ENCODE measurements at regions of chr17 and their contacts with region 1.

Region 1: DNA sequence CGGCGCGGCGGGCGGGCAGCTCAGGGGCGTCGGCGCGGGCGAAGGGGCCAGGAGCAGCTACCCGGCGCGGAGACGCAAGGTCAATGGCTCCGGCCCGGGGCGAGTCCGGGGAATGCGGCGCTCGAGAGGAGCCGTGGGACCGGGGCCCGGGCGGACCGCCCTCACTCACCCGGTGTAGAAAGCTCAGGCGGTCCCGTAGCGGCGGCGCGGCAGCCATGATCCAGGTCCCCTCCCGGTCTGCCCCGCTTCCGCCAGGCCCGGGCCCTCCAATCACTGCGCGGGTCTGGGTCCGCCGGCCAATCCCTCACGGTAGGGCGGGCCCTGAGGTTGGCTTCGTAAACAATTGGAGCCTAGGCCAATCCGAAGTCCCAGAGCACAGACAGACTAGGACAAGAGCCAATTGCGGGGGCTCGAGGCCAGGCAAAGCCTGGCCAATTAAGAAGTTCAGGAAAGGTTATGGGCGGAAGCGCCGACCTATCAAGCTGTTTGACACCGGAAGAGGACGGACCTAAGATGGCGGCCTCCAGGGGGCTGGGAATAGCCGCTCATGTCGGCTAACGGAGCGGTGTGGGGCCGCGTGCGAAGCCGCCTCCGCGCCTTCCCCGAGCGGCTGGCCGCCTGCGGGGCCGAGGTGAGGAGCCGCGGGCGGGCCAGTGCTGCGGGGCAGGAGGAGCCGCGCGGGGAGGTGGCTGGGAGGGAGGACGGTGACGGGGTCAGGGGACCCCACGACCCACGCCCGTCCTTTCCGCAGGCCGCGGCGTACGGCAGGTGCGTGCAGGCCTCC is at the starts of genes NDUFAF8 and TEPSIN:
- DNase-seq: peak; percentile 96 to 98
- ATAC-seq: peak; percentile 93 to 98 (median 93)
- H3K4me3 ChIP-seq: peak within 1 kb of the TSS; percentile 65
- H3K4me3 Mint-ChIP-seq: peak within 1 kb of the TSS; percentile 94
- H3K27ac ChIP-seq: peak within 1 kb of the TSS; percentile 11
- H3K27ac Mint-ChIP-seq: peak within 1 kb of the TSS; percentile 76 to 90
- H3K4me1 ChIP-seq: peaks cover 50% of the 10 kb centered on the region
- H3K4me1 Mint-ChIP-seq: peaks cover 28 to 49% of the 10 kb centered on the region in 2 donors
- H3K27me3 ChIP-seq: no peaks in the 10 kb centered on the region
- H3K27me3 Mint-ChIP-seq: no peaks in the 10 kb centered on the region
- CTCF ChIP-seq: no peak
- total RNA-seq, gene NDUFAF8: 28.6 to 36.4 (median 34.9) TPM
- total RNA-seq, gene TEPSIN: 89.8 to 137 (median 126) TPM

Region 2: DNA sequence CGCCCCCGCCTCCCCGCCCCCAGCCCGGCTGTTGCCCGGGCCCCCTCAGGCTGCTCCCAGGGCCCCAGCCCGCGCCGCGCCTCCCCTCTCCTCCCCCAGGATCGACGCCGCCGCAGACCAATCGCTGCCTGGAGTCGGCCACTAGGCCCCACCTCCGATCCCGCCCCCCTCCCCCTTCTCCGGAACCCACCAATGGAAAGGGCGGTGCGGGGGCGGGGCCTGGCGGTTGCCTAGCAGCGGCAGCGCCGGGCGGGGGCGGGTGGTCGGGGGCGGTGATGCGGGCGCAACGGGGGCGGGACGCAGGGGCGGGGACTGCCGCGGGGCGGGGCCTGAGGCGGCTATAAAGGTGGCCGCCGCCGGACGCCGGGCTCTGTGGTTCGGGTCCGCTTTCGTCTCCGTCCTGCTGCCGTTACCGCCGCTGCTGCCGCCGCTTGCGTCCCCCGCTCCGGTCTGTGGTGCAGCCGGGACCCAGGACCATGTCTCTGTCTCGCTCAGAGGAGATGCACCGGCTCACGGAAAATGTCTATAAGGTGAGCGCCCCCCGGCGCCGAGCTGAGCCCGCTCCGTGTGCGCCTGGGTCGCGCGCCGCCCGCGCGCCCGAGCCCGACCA is 204.1 kb before region 1 on chr17 and contains the start of gene BAIAP2:
- intact Hi-C with region 1: loop called (anchors 10 kb)
- DNase-seq: peak; percentile 92 to 97
- ATAC-seq: peak; percentile 84 to 93 (median 86)
- H3K4me3 ChIP-seq: peak within 1 kb of the TSS; percentile 66
- H3K4me3 Mint-ChIP-seq: peak within 1 kb of the TSS; percentile 94
- H3K27ac ChIP-seq: no peak within 1 kb of the TSS
- H3K27ac Mint-ChIP-seq: peak within 1 kb of the TSS; percentile 70 to 78
- H3K4me1 ChIP-seq: peaks cover 27% of the 10 kb centered on the region
- H3K4me1 Mint-ChIP-seq: peaks cover 8 to 30% of the 10 kb centered on the region in 2 donors
- H3K27me3 ChIP-seq: no peaks in the 10 kb centered on the region
- H3K27me3 Mint-ChIP-seq: peaks cover 0 to 9% of the 10 kb centered on the region in 2 donors
- CTCF ChIP-seq: no peak
- total RNA-seq, gene BAIAP2: 6.7 to 12.3 (median 10.4) TPM

Region 3: DNA sequence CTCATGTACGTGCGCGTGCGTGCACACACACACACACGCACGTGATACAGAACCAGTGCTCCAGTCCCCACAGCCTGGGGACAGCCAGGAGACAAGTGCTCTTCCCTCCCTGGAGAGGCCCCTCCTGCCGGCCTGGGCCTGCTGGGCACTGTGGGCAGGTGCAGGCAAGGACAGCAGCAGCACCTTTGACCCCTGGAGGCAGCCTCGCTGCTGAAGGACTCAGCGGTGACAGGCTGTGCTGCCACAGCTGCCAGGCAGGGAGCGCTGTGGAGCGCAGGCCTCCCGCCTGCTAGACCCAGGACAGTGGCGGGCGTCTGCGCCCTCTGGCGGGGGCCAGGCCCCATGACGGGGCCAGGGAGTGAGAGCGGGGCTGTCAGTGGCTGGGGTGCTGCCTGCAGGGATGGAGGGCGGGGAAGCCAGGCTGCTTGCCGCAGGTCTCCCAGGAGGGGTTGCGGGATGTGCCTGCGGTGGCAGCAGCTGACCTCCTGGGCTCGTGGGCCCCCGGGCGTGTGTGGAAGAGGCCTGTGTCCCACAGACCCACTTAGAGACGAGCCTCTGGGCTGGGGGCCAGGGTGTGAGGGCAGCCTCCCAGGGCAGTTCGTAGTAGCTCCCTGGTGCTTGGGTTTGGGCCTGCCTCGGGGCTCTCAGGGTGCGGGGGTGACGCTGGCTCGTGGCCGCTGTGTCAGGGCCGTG is 137.2 kb before region 1 on chr17:
- intact Hi-C with region 1: loop called (anchors 1 kb)
- DNase-seq: peak; percentile 87 to 94
- ATAC-seq: peak; percentile 99 to 100 (median 99)
- H3K4me3 ChIP-seq: no peak overlapping the region
- H3K4me3 Mint-ChIP-seq: no peak overlapping the region
- H3K27ac ChIP-seq: no peak overlapping the region
- H3K27ac Mint-ChIP-seq: no peak overlapping the region
- H3K4me1 ChIP-seq: peaks cover 22% of the 10 kb centered on the region
- H3K4me1 Mint-ChIP-seq: peaks cover 0 to 8% of the 10 kb centered on the region in 2 donors
- H3K27me3 ChIP-seq: no peaks in the 10 kb centered on the region
- H3K27me3 Mint-ChIP-seq: no peaks in the 10 kb centered on the region
- CTCF ChIP-seq: peak; percentile 100

Region 4: DNA sequence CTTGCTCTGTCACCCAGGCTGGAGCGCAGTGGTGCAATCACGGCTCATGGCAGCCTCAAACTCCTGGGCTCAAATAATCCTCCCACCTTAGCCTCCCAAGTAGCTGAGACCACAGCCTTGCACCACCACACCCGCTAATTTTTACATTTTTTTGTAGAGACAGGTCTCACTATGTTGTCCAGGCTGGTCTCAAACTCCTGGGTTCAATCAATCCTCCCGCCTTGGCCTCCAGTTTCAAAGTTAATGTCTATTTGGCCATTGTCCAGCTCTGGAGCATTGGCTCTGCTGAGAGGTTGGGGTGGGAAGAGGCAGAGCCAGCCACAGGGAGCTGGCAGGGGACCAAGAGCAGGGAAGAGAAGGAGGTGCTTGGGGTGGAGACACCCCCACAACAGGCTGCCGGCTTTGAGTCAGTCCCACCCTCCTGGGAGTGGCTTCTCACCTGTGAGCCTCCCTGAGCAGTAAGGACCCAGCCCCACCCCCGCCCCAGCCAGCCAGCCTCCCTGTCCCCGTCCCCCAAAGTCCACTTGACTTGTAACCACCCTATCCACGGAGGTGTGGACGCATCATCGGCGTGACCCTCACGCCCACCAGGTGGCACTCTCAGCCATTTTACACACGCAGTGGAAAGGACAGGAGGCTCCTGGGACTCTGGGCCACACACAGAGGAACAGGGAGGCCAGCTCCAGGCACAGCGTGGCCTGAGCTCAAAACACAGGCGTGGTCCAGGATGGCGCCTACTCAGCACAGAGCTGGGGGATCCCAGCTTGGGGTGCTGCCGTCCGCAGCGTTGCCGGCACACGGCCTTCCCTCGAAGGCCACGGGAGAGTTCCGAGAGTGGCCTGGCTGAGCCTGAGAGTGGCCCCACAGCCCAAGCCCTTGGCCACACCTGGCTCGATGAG is 96.5 kb before region 1 on chr17:
- intact Hi-C with region 1: loop called (anchors 1 kb)
- DNase-seq: peak; percentile 60 to 77
- ATAC-seq: peak; percentile 74 to 93 (median 87)
- H3K4me3 ChIP-seq: no peak overlapping the region
- H3K4me3 Mint-ChIP-seq: no peak overlapping the region
- H3K27ac ChIP-seq: no peak overlapping the region
- H3K27ac Mint-ChIP-seq: no peak overlapping the region
- H3K4me1 ChIP-seq: peaks cover 6% of the 10 kb centered on the region
- H3K4me1 Mint-ChIP-seq: peaks cover 0 to 14% of the 10 kb centered on the region in 2 donors
- H3K27me3 ChIP-seq: no peaks in the 10 kb centered on the region
- H3K27me3 Mint-ChIP-seq: no peaks in the 10 kb centered on the region
- CTCF ChIP-seq: peak; percentile 50

Region 5: DNA sequence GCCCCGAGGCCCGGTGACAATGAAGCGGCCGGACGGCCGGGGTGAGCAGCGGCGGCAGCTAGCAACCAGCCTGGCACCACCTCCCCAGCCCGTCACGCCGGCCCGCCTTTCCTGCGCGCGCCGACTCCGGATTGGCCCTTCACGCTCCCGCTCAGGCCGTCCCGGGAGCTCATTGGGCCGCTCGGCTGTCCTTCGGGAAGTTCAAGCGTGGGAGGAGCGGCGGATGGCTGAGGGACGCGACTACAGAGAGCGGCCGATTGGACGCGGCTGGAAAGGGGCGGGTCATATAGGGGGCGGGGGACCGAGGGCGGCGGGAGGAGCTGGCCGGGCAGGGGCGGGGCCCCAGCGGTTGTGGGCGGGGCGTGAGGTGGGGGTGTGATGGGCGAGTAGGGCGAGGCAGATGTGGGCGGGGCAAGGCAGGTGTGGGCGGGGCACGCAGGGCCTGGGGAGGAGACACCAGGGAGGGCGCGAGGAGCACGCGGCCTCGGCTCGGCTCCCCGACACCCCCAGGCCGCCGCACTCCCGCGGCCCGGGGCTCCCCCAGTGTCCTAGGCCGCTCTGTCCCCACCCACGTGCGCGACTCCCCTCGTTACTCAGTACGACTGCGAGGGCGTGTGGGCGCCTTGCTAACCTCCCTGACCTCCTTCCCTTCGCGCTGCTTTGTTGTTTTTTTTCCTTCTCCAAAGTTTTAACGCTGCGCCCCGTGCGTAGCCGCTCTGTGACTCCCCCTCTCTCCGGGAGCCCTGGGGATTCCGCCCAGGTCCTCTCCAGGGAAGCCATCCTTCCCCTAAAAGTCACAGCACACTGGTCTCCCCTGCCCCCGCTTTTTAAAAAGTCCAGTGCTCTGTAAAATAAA is 15.9 kb before region 1 on chr17 and contains the start of gene CEP131:
- intact Hi-C with region 1: loop called (anchors 1 kb)
- DNase-seq: peak; percentile 98 to 99
- ATAC-seq: peak; percentile 93 to 99 (median 93)
- H3K4me3 ChIP-seq: peak within 1 kb of the TSS; percentile 46
- H3K4me3 Mint-ChIP-seq: peak within 1 kb of the TSS; percentile 85
- H3K27ac ChIP-seq: no peak within 1 kb of the TSS
- H3K27ac Mint-ChIP-seq: peak within 1 kb of the TSS; percentile 73 to 83
- H3K4me1 ChIP-seq: peaks cover 24% of the 10 kb centered on the region
- H3K4me1 Mint-ChIP-seq: peaks cover 17 to 22% of the 10 kb centered on the region in 2 donors
- H3K27me3 ChIP-seq: no peaks in the 10 kb centered on the region
- H3K27me3 Mint-ChIP-seq: no peaks in the 10 kb centered on the region
- CTCF ChIP-seq: no peak
- total RNA-seq, gene CEP131: 9.9 to 11.4 (median 10.0) TPM